PC-3 (cell line): ENCODE measurements at regions of chr12 and their contacts with region 1.

Region 1: DNA sequence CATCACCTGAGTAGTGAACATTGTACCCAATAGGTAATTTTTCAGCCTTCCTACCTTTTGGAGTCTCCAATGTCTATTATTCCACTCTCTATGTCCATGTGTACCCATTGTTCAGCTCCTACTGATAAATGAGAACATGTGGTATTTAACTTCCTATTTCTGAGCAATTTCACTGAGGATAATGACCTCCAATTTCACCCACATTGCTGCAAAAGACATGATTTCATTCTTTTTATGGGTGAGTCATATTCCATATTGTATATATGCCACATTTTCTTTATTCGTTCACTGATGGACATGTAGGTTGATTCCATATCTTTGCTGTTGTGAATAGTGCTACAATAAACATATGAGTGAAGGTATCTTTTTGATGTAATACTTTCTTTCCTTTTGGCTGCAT is 16.4 kb upstream of the BTG1 start:
- DNase-seq: peak; percentile 43
- ATAC-seq: peak; percentile 62
- H3K4me3 ChIP-seq: no peak overlapping the region
- H3K27ac ChIP-seq: no peak overlapping the region
- H3K4me1 ChIP-seq: peaks cover 17% of the 10 kb centered on the region
- H3K27me3 ChIP-seq: no peaks in the 10 kb centered on the region
- CTCF ChIP-seq: no peak

Region 2: GRCh38 chr12:91965781-91966180 is 196.3 kb before region 1 on chr12:
- CTCF ChIA-PET with region 1: no interaction called
- POLR2A ChIA-PET with region 1: no interaction called
- intact Hi-C with region 1: no loop called
- DNase-seq: no peak
- ATAC-seq: no peak
- H3K4me3 ChIP-seq: no peak overlapping the region
- H3K27ac ChIP-seq: no peak overlapping the region
- H3K4me1 ChIP-seq: no peaks in the 10 kb centered on the region
- H3K27me3 ChIP-seq: no peaks in the 10 kb centered on the region
- CTCF ChIP-seq: no peak

Region 3: GRCh38 chr12:92408072-92408900 is 246.2 kb after region 1 on chr12:
- CTCF ChIA-PET with region 1: no interaction called
- POLR2A ChIA-PET with region 1: no interaction called
- intact Hi-C with region 1: loop called (anchors 5 kb)
- DNase-seq: peak; percentile 76
- ATAC-seq: peak; percentile 71
- H3K4me3 ChIP-seq: no peak overlapping the region
- H3K27ac ChIP-seq: no peak overlapping the region
- H3K4me1 ChIP-seq: no peaks in the 10 kb centered on the region
- H3K27me3 ChIP-seq: no peaks in the 10 kb centered on the region
- CTCF ChIP-seq: peak; percentile 87